Activated CD4-positive, alpha-beta T cell treated with anti-CD3 and anti-CD28 coated beads for 36 hours (primary cell): ENCODE measurements at regions of chr4 and their contacts with region 1.

Region 1: GRCh38 chr4:118684873-118685811 is at the start of gene METTL14:
- DNase-seq: peak; percentile 93
- ATAC-seq: peak; percentile 96
- H3K4me3 Mint-ChIP-seq: peak within 1 kb of the TSS; percentile 99
- H3K27ac Mint-ChIP-seq: peak within 1 kb of the TSS; percentile 90
- H3K4me1 Mint-ChIP-seq: peaks cover 24% of the 10 kb centered on the region
- H3K27me3 Mint-ChIP-seq: peaks cover 2% of the 10 kb centered on the region
- total RNA-seq, gene METTL14: 45.1 to 48.4 TPM

Region 2: DNA sequence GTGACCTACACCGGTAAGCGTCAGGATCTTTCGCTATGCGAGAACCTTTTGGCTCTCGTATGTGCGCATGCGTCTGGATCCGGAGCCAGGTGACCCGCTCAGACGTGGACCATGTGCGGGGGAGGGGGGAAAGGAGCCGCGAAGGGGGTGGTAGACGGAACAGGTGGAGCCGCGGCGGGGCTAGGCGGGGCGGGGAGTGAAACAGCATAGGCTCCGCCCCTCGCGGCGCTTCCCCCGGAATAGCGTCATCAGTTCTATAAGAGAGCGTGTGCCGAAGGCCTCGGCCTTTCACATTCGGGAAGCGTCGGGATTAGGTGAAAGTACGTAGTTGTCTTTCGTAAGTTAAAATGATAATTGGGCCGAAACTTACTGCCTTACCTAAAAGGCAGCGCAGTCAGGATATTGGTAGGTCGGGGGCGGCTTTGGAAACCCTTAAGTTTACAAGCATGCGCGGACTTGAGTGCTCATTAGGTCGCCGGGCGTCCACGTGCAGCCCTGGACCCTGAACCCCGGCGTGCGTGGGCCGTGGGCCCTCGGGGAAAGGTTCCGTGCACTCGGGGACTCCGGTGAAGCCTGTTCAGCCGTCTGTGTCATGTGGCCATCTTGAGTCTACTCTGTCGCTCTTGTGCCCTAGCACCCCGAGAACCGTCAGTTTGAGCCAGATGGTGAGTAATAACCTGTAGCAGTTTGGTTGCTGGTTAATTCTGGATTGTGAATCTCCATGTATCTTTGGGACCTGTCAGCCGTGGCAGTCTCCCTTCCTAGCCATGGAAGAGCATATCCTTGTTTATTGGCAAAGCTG is 406.5 kb before region 1 on chr4:
- CTCF ChIA-PET with region 1: no interaction called
- POLR2A ChIA-PET with region 1: no interaction called
- intact Hi-C with region 1: loop called in 1 of 2 experiments (anchors 1 kb)
- DNase-seq: peak; percentile 99
- ATAC-seq: peak; percentile 96
- H3K4me3 Mint-ChIP-seq: peak overlapping the region; percentile 96
- H3K27ac Mint-ChIP-seq: peak overlapping the region; percentile 99
- H3K4me1 Mint-ChIP-seq: peaks cover 37% of the 10 kb centered on the region
- H3K27me3 Mint-ChIP-seq: no peaks in the 10 kb centered on the region

Region 3: GRCh38 chr4:118586357-118586790 is 98.8 kb before region 1 on chr4:
- CTCF ChIA-PET with region 1: no interaction called
- POLR2A ChIA-PET with region 1: no interaction called
- intact Hi-C with region 1: loop called in 1 of 2 experiments (anchors 1 kb)
- DNase-seq: no peak
- ATAC-seq: no peak
- H3K4me3 Mint-ChIP-seq: no peak overlapping the region
- H3K27ac Mint-ChIP-seq: no peak overlapping the region
- H3K4me1 Mint-ChIP-seq: peaks cover 9% of the 10 kb centered on the region
- H3K27me3 Mint-ChIP-seq: peaks cover 16% of the 10 kb centered on the region

Region 4: DNA sequence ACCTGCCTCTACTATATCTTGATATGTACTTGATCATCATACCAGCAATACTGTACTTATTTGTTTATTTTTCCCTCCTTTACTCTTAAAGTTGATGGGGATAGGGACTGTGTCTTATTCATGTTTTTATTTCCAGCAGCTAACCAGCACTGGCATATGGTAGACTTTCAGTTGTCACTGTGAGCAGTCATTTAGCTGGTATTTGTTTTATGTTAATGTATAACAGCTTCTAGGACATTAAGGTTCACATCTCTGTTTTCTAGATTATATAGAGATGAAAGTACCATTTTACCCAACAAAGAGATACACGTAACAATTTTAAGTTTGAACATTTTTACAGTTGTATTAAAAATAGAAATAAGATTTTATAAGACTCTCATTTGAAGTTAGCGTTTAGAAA is 18.0 kb after region 1 on chr4:
- CTCF ChIA-PET with region 1: no interaction called
- POLR2A ChIA-PET with region 1: interaction called, 3 read pairs
- intact Hi-C with region 1: loop called in 1 of 2 experiments (anchors 1 kb)
- DNase-seq: no peak
- ATAC-seq: no peak
- H3K4me3 Mint-ChIP-seq: no peak overlapping the region
- H3K27ac Mint-ChIP-seq: no peak overlapping the region
- H3K4me1 Mint-ChIP-seq: no peaks in the 10 kb centered on the region
- H3K27me3 Mint-ChIP-seq: no peaks in the 10 kb centered on the region

Region 5: GRCh38 chr4:119300101-119300978 is 615.2 kb after region 1 on chr4:
- CTCF ChIA-PET with region 1: no interaction called
- POLR2A ChIA-PET with region 1: no interaction called
- intact Hi-C with region 1: loop called in 1 of 2 experiments (anchors 1 kb)
- DNase-seq: peak; percentile 97
- ATAC-seq: peak; percentile 98
- H3K4me3 Mint-ChIP-seq: peak overlapping the region; percentile 100
- H3K27ac Mint-ChIP-seq: peak overlapping the region; percentile 96
- H3K4me1 Mint-ChIP-seq: peaks cover 25% of the 10 kb centered on the region
- H3K27me3 Mint-ChIP-seq: no peaks in the 10 kb centered on the region